Caco-2 (cell line): ENCODE measurements at regions of chr1 and their contacts with region 1.

Region 1: GRCh38 chr1:113389953-113390834 is at the start of gene MAGI3:
- DNase-seq: peak; percentile 97 to 98
- H3K4me3 ChIP-seq: peak within 1 kb of the TSS; percentile 71
- H3K4me3 Mint-ChIP-seq: peak within 1 kb of the TSS; percentile 90
- H3K27ac Mint-ChIP-seq: peak within 1 kb of the TSS; percentile 34
- H3K4me1 ChIP-seq: peaks cover 8% of the 10 kb centered on the region
- H3K4me1 Mint-ChIP-seq: no peaks in the 10 kb centered on the region
- H3K27me3 ChIP-seq: no peaks in the 10 kb centered on the region
- H3K27me3 Mint-ChIP-seq: no peaks in the 10 kb centered on the region
- CTCF ChIP-seq: no peak
- total RNA-seq, gene MAGI3: 27.6 and 28.7 TPM in 2 replicates

Region 2: DNA sequence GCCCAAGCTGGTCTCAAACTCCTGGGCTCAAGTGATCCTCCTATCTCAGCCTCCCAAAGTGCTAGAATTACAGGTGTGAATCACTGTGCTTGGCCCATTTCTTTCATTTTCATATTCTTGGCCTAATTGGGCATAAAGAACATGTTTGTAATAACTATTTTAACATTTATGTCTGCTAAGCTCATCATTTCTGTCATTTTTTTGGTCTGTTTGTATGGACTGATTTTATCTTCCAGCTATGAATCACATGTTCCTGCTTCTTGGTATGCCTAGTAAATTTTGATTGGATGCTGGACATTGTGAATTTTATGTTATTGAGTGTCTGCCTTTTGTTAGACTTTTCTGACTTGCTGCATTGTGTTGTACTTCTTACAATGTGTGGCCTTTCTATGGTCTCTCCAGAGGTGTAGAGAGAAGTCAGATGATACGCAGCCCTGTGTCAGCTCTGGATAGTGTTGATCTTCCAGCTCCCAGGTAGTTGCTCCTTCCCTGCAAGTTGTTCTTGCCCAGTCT is 636.0 kb before region 1 on chr1:
- CTCF ChIA-PET with region 1: no interaction called
- POLR2A ChIA-PET with region 1: no interaction called
- intact Hi-C with region 1: no loop called
- DNase-seq: no peak
- H3K4me3 ChIP-seq: no peak overlapping the region
- H3K4me3 Mint-ChIP-seq: no peak overlapping the region
- H3K27ac Mint-ChIP-seq: no peak overlapping the region
- H3K4me1 ChIP-seq: no peaks in the 10 kb centered on the region
- H3K4me1 Mint-ChIP-seq: peaks cover 7% of the 10 kb centered on the region
- H3K27me3 ChIP-seq: no peaks in the 10 kb centered on the region
- H3K27me3 Mint-ChIP-seq: no peaks in the 10 kb centered on the region
- CTCF ChIP-seq: no peak

Region 3: DNA sequence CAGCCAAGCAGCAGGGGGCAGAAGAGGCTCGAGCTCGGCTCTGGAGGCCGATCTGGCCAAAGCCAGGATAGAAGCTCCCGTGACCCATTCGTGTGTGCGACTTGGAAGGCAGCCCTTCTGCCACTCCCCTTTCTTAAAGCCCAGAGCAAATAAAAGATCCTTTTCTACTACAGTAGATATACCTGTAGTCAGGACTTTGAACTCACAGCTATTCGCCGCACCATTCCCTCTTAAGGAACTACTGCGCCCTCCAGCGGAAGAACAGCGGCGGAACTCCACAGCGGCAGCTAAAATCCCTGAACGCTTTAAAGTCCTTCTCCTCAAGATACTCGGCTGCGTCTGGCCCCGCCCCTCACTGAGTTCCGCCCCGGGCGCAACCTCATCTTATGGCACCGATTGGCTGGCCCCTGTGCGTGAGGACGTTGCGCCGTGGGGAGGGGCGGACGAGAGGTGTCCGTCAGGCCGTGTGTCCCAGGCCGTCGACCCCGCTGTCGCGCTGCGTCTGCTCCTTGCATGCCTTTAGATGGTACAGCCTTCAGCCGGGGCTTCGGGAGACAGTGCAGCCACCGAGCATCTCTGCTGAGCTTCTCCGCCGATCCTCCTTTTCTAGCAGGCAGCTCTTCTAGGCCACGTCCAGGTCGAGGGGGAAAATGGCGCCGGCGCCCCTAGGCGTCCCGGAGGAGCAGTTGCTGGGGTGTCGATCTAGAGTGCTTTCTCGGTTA is 317.3 kb before region 1 on chr1 and contains the start of gene LRIG2:
- CTCF ChIA-PET with region 1: interaction called, 4 read pairs
- POLR2A ChIA-PET with region 1: no interaction called
- intact Hi-C with region 1: loop called (anchors 5 kb)
- DNase-seq: peak; percentile 96 to 98
- H3K4me3 ChIP-seq: peak within 1 kb of the TSS; percentile 92
- H3K4me3 Mint-ChIP-seq: peak within 1 kb of the TSS; percentile 85
- H3K27ac Mint-ChIP-seq: peak within 1 kb of the TSS; percentile 80
- H3K4me1 ChIP-seq: peaks cover 5% of the 10 kb centered on the region
- H3K4me1 Mint-ChIP-seq: no peaks in the 10 kb centered on the region
- H3K27me3 ChIP-seq: no peaks in the 10 kb centered on the region
- H3K27me3 Mint-ChIP-seq: no peaks in the 10 kb centered on the region
- CTCF ChIP-seq: peak; percentile 45 to 56
- total RNA-seq, gene LRIG2: 10.7 and 14.4 TPM in 2 replicates

Region 4: DNA sequence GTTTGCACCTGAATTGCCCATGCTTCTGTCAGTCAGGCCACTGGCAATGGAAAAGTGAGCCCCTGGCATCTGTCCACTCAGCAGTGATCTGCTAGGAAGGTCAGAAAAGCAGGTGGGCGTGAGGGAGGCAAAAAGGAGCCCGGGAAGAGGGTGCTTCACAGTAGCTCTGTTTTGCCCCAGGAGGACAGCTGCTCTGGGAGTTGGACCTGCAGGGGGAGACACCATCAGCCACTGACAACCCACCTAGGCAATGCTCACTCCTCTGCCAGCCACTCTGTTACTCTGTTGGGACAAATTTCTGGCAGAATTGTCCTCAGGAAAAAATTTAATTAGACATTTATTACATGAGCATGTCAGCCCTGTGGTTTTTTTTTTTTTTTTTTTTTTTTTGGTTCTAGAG is 170.8 kb before region 1 on chr1:
- CTCF ChIA-PET with region 1: no interaction called
- POLR2A ChIA-PET with region 1: no interaction called
- intact Hi-C with region 1: loop called (anchors 2 kb)
- DNase-seq: no peak
- H3K4me3 ChIP-seq: no peak overlapping the region
- H3K4me3 Mint-ChIP-seq: no peak overlapping the region
- H3K27ac Mint-ChIP-seq: peak overlapping the region; percentile 55
- H3K4me1 ChIP-seq: peaks cover 39% of the 10 kb centered on the region
- H3K4me1 Mint-ChIP-seq: peaks cover 34% of the 10 kb centered on the region
- H3K27me3 ChIP-seq: no peaks in the 10 kb centered on the region
- H3K27me3 Mint-ChIP-seq: no peaks in the 10 kb centered on the region
- CTCF ChIP-seq: no peak

Region 5: GRCh38 chr1:113320972-113321690 is 69.1 kb before region 1 on chr1:
- CTCF ChIA-PET with region 1: no interaction called
- POLR2A ChIA-PET with region 1: no interaction called
- intact Hi-C with region 1: loop called (anchors 1 kb)
- DNase-seq: peak in 1 of 2 experiments; percentile 42
- H3K4me3 ChIP-seq: no peak overlapping the region
- H3K4me3 Mint-ChIP-seq: no peak overlapping the region
- H3K27ac Mint-ChIP-seq: no peak overlapping the region
- H3K4me1 ChIP-seq: peaks cover 38% of the 10 kb centered on the region
- H3K4me1 Mint-ChIP-seq: peaks cover 13% of the 10 kb centered on the region
- H3K27me3 ChIP-seq: no peaks in the 10 kb centered on the region
- H3K27me3 Mint-ChIP-seq: no peaks in the 10 kb centered on the region
- CTCF ChIP-seq: no peak

Region 6: GRCh38 chr1:113479713-113480676 is 89.8 kb after region 1 on chr1:
- CTCF ChIA-PET with region 1: no interaction called
- POLR2A ChIA-PET with region 1: no interaction called
- intact Hi-C with region 1: no loop called
- DNase-seq: no peak
- H3K4me3 ChIP-seq: no peak overlapping the region
- H3K4me3 Mint-ChIP-seq: no peak overlapping the region
- H3K27ac Mint-ChIP-seq: no peak overlapping the region
- H3K4me1 ChIP-seq: no peaks in the 10 kb centered on the region
- H3K4me1 Mint-ChIP-seq: no peaks in the 10 kb centered on the region
- H3K27me3 ChIP-seq: no peaks in the 10 kb centered on the region
- H3K27me3 Mint-ChIP-seq: no peaks in the 10 kb centered on the region
- CTCF ChIP-seq: no peak

Region 7: DNA sequence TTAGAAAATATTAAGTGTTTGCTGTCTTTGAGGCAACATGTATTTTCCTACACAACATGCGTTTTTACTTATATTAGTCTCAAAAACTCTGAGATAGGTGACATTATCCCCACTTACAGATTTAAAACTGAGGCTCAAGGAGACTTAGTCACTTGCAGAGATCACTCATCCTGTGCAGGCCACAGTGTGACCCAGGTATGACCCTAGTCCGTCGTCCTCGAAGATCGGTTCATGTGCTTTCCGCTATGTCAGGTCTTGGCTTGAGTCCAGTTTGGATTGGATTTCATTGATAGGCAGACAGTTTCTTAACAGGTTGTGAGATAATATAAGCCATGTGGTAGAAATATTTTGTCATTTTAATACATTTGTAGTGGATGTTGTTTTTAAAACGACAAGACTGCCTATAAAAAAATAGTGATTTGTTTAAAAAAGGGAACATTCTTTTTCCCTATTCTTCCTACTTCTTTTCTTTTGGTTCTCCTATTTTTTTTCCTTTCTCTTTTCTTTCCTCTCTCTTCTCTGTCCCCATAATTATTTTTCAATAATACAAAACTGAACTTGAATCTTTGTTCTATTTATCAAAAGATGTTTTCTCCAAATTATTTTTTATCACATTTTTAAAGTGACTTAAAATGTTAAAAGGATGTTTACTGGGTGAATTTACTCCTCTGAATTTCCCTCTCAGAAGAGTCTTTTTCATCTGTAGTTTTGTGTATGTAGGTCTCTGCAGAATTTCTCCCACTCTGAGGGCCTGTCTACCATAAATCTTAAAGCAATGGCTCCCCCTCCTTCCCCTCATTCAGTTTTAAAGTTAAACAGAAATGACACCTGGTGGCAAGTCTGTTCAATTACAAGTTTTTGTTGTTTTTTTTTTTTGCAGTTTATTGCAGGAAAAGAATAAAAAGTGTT is 287.3 kb after region 1 on chr1:
- CTCF ChIA-PET with region 1: no interaction called
- POLR2A ChIA-PET with region 1: no interaction called
- intact Hi-C with region 1: loop called (anchors 5 kb)
- DNase-seq: peak in 1 of 2 experiments; percentile 39
- H3K4me3 ChIP-seq: no peak overlapping the region
- H3K4me3 Mint-ChIP-seq: no peak overlapping the region
- H3K27ac Mint-ChIP-seq: no peak overlapping the region
- H3K4me1 ChIP-seq: 0 out of 2 replicates have a peak, but pooled peaks cover 10% of the 10 kb centered on the region
- H3K4me1 Mint-ChIP-seq: peaks cover 23% of the 10 kb centered on the region
- H3K27me3 ChIP-seq: no peaks in the 10 kb centered on the region
- H3K27me3 Mint-ChIP-seq: no peaks in the 10 kb centered on the region
- CTCF ChIP-seq: peak; percentile 26 to 28